ENCODE measurements at regions of chr7 and their contacts with region 1.

Region 1: DNA sequence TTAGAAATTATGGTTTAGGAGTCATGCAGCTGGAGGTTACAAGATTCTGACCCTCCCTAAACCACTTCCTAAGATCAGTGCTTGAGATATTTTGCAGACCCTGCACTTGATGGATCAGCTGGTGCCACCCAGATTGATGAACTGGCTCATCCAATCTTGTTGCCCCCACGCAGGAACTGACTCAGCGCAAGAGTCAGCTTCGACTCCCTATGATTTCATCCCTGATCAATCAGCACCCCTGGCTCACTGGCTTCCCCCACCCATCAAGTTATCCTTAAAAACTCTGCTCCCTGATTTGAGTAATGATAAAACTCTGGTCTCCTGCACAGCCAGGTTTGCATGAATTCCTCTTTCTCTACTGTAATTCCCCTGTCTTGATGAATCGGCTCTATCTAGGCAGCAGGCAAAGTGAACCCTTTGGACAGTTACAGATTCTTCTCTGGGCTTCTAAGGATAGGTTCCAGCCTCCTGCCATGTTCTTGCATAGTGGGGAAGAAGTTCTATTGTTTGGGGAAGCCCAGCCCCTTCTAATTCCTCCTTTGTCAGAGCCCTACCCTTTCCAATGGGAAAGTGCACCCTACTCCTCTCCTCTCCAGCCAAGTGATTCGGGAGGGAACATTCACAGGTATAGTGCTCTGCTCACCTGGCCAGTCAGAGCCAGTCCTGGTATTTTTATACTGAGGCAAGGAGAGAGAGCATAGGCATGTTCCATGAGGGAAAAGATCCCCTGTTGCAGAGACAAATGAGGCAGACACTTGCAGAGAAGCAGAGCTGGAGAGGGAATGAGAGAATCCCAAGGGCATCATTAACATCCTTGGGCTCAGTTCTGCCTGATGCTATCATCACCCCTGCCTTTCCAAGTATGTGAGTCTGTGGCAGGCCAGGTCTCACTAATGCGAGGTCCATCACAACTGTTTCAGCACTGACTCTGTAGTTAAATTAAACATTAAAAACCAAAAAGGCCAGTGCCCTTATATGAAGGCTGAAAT is 224.4 kb upstream of the GALNT17 start:
- DNase-seq: no peak

Region 2: GRCh38 chr7:70923181-70923845 is 15.8 kb after region 1 on chr7:
- intact Hi-C with region 1: loop called in 1 of 2 experiments (anchors 1 kb)
- DNase-seq: no peak

Region 3: DNA sequence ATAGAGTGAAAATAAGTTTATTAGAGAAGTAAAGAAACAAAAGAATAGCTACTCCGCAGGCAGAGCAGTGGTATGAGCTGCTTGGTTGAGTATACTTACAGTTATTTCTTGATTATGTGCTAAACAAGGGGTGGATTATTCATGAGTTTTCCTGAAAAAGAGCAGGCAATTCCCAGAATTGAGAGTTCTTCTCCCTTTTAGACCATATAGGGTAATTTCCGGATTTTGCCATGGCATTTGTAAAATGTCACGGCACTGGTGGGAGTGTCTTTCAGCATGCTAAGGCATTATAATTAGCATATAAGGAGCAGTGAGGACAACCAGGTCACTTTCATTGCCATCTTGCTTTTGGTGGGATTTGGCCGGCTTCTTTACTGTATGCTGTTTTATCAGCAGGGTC is 198.7 kb after region 1 on chr7:
- intact Hi-C with region 1: no loop called
- DNase-seq: no peak

Measured in posterior vena cava (tissue), 2 donors.